ENCODE measurements at regions of chr7 and their contacts with region 1.

Region 1: GRCh38 chr7:115679976-115680375 is 350.6 kb downstream of the TFEC start:
- DNase-seq: peak; percentile 61
- ATAC-seq: peak; percentile 50; the same call in 1 of the 2 replicates
- H3K4me3 ChIP-seq: no peak overlapping the region
- H3K27ac ChIP-seq: no peak overlapping the region
- H3K4me1 ChIP-seq: peaks cover 24% of the 10 kb centered on the region
- H3K27me3 ChIP-seq: no peaks in the 10 kb centered on the region
- CTCF ChIP-seq: peak; percentile 70

Region 2: DNA sequence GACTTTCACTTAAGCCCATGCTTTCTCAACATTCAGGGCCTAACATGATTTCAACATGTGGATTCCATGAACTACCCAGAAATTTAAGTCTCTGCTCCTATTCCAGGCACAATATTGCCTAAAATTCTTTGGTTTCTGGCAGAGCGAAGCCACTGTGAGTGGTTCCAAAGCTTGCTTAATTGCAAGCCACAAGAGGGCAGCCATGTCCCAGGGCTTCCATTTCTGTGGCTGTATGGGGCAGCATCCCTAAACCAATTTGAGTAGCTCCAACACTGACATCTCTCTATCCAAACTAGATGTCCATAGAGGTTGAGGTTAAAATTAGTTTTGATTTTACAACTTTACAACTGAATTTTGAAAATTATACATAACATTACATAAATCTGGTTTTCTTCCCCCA is 814.4 kb before region 1 on chr7:
- CTCF ChIA-PET with region 1: interaction called, 4 read pairs
- POLR2A ChIA-PET with region 1: no interaction called
- intact Hi-C with region 1: loop called (anchors 1 kb)
- DNase-seq: peak; percentile 60
- ATAC-seq: peak; percentile 82; the same call in 1 of the 2 replicates
- H3K4me3 ChIP-seq: no peak overlapping the region
- H3K27ac ChIP-seq: no peak overlapping the region
- H3K4me1 ChIP-seq: peaks cover 11% of the 10 kb centered on the region
- H3K27me3 ChIP-seq: no peaks in the 10 kb centered on the region
- CTCF ChIP-seq: peak; percentile 87

Region 3: DNA sequence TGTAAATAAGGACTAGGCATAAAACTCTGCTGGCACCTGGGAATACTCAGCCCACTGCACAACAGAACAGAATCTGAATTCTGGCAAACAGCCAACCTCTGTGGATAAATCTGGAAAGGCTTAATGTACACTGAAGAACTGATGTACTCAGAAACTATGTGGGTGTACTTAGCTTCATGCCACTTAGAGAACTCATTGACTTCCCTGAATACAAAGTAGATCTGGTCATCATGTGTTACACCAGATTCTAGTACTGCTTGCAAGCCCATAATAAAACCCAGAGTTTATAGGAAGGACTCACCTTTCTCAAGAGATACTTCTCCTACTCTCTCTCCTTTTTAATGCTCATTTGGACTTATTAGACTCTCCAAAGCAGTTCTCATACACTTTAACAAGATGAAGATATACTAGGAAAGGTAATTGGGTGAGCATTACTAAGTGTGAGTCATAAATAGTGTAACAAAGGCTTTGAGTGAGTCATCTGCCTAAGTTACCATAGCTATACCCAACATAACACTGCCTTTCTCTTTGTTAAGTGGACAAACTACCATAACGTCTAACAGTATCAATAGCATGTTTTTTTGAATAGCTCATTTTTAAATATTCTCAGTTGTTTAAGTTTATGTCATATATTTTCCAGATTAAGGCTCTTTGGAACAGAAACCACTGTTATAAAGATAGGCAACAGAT is 448.9 kb before region 1 on chr7:
- CTCF ChIA-PET with region 1: no interaction called
- POLR2A ChIA-PET with region 1: no interaction called
- intact Hi-C with region 1: loop called (anchors 2 kb)
- DNase-seq: peak; percentile 91
- ATAC-seq: peak; percentile 96
- H3K4me3 ChIP-seq: peak overlapping the region; percentile 20; the same call in 1 of the 2 replicates
- H3K27ac ChIP-seq: peak overlapping the region; percentile 87
- H3K4me1 ChIP-seq: peaks cover 25% of the 10 kb centered on the region
- H3K27me3 ChIP-seq: no peaks in the 10 kb centered on the region
- CTCF ChIP-seq: no peak

Region 4: GRCh38 chr7:115491744-115492380 is 188.1 kb before region 1 on chr7:
- CTCF ChIA-PET with region 1: no interaction called
- POLR2A ChIA-PET with region 1: no interaction called
- intact Hi-C with region 1: loop called (anchors 2 kb)
- DNase-seq: no peak
- ATAC-seq: peak; percentile 35; the same call in 1 of the 2 replicates
- H3K4me3 ChIP-seq: no peak overlapping the region
- H3K27ac ChIP-seq: no peak overlapping the region
- H3K4me1 ChIP-seq: peaks cover 7% of the 10 kb centered on the region; the same call in 1 of the 2 replicates
- H3K27me3 ChIP-seq: peaks cover 9% of the 10 kb centered on the region; the same call in 1 of the 2 replicates
- CTCF ChIP-seq: no peak

Region 5: DNA sequence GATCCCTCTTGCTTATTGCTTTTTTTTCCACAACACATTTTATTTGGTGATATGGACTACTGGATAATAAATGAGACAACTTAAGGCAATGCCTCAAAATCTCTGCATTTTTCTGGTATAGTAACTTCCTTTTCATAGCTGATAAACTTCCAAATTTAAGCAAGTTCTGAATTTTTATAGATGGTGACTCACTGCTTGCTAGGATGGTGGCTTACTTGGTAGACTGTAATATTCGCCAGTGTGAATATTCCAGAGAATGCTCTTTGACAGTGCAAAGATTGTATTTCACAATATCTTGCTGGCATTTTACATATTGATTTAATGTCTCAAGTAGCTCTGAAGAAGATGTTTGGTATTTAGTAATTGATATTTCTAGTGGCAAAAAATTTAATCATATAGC is 121.8 kb before region 1 on chr7:
- CTCF ChIA-PET with region 1: no interaction called
- POLR2A ChIA-PET with region 1: no interaction called
- intact Hi-C with region 1: loop called (anchors 5 kb)
- DNase-seq: peak; percentile 85
- ATAC-seq: peak; percentile 93
- H3K4me3 ChIP-seq: no peak overlapping the region
- H3K27ac ChIP-seq: peak overlapping the region; percentile 12; the same call in 1 of the 2 replicates
- H3K4me1 ChIP-seq: peaks cover 21% of the 10 kb centered on the region
- H3K27me3 ChIP-seq: no peaks in the 10 kb centered on the region
- CTCF ChIP-seq: no peak